ENCODE measurements at regions of chr10 and their contacts with region 1.

Region 1: DNA sequence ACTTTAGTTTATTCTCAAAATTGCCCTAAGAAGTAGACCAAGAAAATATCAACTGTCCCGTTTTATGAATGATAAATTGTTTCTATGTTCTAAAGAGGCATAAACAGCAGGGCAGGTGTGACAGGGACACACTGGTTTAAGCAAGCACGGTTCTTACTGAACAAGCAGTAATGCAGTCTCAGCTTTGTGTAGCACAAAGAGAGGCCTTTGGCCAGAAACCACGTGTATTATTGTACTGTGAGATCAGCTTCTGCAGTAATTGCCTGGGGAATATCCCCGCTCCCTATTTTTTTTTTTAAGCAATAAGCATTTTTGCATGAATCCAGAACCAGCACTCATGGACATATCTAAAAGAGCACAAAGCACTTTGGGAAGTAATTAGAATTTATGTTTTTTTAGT is 255.4 kb downstream of the WDR11 start:
- DNase-seq: no peak
- ATAC-seq: no peak
- H3K4me3 ChIP-seq: no peak overlapping the region
- H3K27ac ChIP-seq: no peak overlapping the region
- H3K4me1 ChIP-seq: no peaks in the 10 kb centered on the region
- H3K27me3 ChIP-seq: no peaks in the 10 kb centered on the region
- CTCF ChIP-seq: no peak

Region 2: GRCh38 chr10:121084016-121084674 is 22.5 kb before region 1 on chr10:
- intact Hi-C with region 1: loop called (anchors 2 kb)
- DNase-seq: no peak
- ATAC-seq: no peak
- H3K4me3 ChIP-seq: no peak overlapping the region
- H3K27ac ChIP-seq: no peak overlapping the region
- H3K4me1 ChIP-seq: peaks cover 17% of the 10 kb centered on the region
- H3K27me3 ChIP-seq: no peaks in the 10 kb centered on the region
- CTCF ChIP-seq: no peak